Activated T-helper 1 cell treated with anti-CD3 and anti-CD28 coated beads, Interleukin-12 subunit alpha, Interleukin-12 subunit beta, Interleukin-2, Interleukin-4 antibody, amounts not matched to agents 30 ng/mL and 10 ng/mL and 1 ng/mL, durations not matched to agents 14 hours and 24 hours and 36 hours (primary cell): ENCODE measurements at regions of chr2 and their contacts with region 1.

Region 1: DNA sequence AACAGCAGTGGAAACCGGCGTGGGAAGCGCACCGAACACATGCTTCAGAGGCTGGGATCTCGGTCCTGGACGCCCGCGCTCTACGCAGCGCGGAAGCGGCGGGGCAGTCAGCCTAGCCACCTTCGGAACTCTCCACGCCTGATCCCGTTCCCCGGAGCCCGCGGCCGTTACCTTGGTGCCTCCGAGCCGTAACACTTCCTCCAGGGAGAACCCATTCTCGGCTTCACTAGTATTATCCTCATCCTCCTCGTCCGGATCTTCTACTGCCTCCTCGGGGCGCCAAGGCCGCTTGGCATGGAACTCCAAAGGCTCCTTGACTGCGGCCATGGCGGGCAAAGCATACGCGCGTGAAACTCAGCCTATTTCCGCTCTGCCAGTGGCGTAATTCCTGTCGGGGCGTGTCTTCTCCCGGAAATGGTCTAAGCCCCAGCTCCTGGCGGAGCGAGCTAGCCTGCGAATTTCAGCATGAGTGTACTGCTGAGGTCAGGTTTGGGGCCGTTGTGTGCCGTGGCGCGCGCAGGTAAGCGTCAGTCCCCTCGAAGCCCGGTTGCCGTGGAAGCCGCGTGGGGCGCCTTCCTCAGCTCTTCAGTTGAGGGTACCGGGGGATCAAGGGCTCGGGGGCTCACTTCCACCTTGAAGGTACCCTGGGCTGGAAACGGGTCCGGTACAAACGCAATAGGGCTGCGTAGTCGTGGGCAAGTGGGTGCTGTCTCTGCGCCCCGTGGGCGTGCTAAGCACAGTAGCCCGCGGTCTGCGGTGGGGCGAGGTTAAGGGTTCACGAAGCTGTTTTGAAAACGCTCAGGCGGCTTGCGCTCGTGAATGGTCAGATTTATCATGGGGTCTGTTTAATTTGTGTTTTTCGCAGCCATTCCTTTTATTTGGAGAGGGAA is at the starts of genes CEBPZ and NDUFAF7:
- DNase-seq: peak; percentile 86
- H3K4me3 Mint-ChIP-seq: no peak within 1 kb of the TSS
- H3K27ac Mint-ChIP-seq: no peak within 1 kb of the TSS
- H3K4me1 Mint-ChIP-seq: peaks cover 26% of the 10 kb centered on the region
- H3K27me3 Mint-ChIP-seq: no peaks in the 10 kb centered on the region
- total RNA-seq, gene CEBPZ: 75.4 and 79.2 TPM in 2 replicates
- total RNA-seq, gene NDUFAF7: 23.0 and 27.1 TPM in 2 replicates

Region 2: GRCh38 chr2:37156857-37157714 is 74.4 kb before region 1 on chr2 and contains the start of gene EIF2AK2:
- intact Hi-C with region 1: loop called (anchors 1 kb)
- DNase-seq: peak; percentile 84
- H3K4me3 Mint-ChIP-seq: peak within 1 kb of the TSS; percentile 89
- H3K27ac Mint-ChIP-seq: peak within 1 kb of the TSS; percentile 93
- H3K4me1 Mint-ChIP-seq: peaks cover 46% of the 10 kb centered on the region
- H3K27me3 Mint-ChIP-seq: no peaks in the 10 kb centered on the region
- total RNA-seq, gene EIF2AK2: 40.5 and 41.9 TPM in 2 replicates

Region 3: DNA sequence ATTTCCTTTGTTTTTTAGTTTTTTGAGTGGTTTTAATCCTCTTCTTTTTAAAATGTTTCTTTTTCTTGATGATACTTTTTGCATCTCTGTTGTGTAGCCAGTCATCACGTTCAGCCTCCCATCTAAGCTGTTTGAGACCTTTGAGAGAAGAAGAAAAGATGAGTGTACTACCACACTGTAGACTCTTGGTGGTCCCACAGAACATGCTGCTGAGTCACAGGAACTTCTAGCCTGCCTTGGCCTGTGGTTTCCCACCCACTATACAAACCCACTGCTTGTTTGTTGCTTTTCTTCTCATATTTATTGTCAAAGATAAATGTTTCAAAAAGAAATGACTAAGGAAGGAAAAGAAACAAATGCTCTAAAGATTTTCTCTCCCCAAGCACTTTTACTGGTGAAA is 29.7 kb before region 1 on chr2:
- intact Hi-C with region 1: loop called (anchors 1 kb)
- DNase-seq: no peak
- H3K4me3 Mint-ChIP-seq: peak overlapping the region; percentile 53
- H3K27ac Mint-ChIP-seq: peak overlapping the region; percentile 75
- H3K4me1 Mint-ChIP-seq: peaks cover 51% of the 10 kb centered on the region
- H3K27me3 Mint-ChIP-seq: no peaks in the 10 kb centered on the region

Region 4: DNA sequence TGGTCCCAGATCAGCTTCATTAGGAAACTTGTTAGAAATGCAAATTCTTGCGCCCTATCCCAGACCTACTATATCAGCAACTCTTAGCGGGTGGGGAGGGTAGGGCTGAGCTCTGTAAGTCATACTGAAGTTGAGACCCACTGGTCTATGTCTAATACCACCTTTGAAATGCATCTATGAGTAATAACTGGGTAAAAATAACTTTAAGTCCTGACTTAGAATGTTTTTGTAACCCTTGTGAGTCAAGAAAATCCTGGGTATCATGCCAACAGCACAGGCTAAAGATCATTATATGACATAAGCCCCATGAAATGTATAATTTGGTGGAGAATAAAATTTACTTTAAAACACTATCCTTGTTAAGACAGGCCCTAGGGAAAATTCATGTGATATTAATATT is 51.7 kb after region 1 on chr2:
- intact Hi-C with region 1: no loop called
- DNase-seq: no peak
- H3K4me3 Mint-ChIP-seq: no peak overlapping the region
- H3K27ac Mint-ChIP-seq: no peak overlapping the region
- H3K4me1 Mint-ChIP-seq: no peaks in the 10 kb centered on the region
- H3K27me3 Mint-ChIP-seq: no peaks in the 10 kb centered on the region

Region 5: DNA sequence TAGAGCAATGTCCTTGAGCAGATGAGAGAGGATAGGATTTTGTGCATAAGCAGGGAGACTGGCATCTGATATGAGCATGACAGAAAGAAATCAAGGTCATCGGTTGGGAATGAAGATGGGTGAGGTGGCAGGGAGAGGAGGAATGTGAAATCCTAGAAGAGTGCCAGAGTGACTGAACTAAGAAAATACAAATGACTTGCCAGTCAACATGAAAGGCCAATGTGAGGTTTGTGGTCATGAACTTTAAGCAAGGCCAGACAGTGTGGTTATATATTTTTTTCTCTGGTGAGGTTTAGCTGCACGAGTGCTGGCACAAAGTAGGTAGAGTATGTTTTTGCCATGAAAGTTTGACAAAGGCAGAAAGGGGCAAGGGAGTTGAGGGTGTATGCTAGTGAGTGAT is 134.2 kb after region 1 on chr2:
- intact Hi-C with region 1: loop called (anchors 2 kb)
- DNase-seq: no peak
- H3K4me3 Mint-ChIP-seq: no peak overlapping the region
- H3K27ac Mint-ChIP-seq: no peak overlapping the region
- H3K4me1 Mint-ChIP-seq: no peaks in the 10 kb centered on the region
- H3K27me3 Mint-ChIP-seq: peaks cover 31% of the 10 kb centered on the region

Region 6: DNA sequence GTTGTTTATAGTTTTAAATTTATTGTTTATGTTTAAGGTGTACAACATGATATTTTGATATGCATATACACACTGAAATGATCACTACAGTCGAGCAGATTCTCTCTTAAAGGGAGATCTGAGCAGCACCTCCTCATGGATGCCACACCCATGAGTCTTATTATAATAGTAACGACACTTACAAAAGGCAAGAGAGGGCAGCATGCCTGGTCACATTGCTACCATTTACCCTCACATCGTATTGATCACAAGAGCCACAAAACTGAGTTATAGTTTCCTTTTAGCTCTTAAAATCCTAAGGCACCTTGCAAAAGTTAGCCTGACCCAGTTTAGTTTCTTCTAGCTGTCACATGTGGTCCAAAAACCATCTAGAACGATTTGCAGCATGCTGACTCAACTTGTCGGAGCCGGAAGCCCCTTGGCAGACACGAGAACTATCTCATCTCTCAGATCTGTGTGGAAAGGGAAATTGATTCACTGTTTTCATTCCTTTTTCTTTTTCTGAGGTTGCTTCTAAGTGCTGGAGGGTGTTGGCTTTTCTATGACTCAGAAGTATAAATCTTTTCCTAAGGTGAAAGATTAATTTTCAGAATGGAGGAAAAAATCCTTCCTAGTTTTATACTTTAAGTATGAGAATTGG is 354.6 kb after region 1 on chr2:
- intact Hi-C with region 1: loop called (anchors 5 kb)
- DNase-seq: peak; percentile 62
- H3K4me3 Mint-ChIP-seq: peak overlapping the region; percentile 56
- H3K27ac Mint-ChIP-seq: peak overlapping the region; percentile 50
- H3K4me1 Mint-ChIP-seq: peaks cover 71% of the 10 kb centered on the region
- H3K27me3 Mint-ChIP-seq: peaks cover 2% of the 10 kb centered on the region

Region 7: DNA sequence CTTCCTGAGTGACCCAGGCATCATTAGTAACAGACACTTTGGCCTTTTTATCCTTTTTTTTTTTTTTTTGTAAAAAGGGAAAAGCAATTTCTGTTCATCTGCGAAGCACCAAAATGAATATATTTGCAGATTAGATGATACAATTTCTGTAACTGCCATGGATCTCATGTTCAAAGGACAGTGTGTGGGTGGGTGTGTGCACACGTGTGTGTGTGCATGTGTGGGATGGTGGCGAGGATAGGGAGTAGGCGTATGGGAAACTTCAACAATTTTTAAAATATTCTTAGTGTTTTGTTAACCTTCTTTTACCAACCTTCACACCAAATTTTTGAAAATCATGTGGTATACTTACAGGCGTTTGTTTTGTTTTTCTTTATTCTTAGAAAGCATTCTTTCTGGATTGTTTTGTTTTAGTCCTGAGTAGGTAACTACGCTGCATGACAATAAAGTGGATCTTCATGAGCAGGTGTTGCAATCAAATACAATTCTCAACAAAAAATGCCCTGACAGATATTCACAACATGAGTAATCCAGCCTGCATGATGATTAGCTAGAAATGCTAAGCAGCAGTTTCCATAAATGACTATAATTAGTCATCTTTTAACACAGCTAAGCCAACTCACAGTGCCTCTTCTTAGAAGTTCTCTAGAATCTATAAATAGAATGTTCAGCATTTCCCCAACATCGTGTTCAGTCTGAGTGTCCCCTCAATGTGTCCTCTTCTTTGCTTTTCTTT is 640.1 kb after region 1 on chr2:
- intact Hi-C with region 1: loop called (anchors 1 kb)
- DNase-seq: no peak
- H3K4me3 Mint-ChIP-seq: peak overlapping the region; percentile 83
- H3K27ac Mint-ChIP-seq: peak overlapping the region; percentile 100
- H3K4me1 Mint-ChIP-seq: peaks cover 51% of the 10 kb centered on the region
- H3K27me3 Mint-ChIP-seq: peaks cover 22% of the 10 kb centered on the region